Caco-2 (cell line): ENCODE measurements at regions of chr10 and their contacts with region 1.

Region 1: GRCh38 chr10:86688398-86688921 is 20.1 kb downstream of the LDB3 start:
- DNase-seq: peak; percentile 62 to 67
- H3K4me3 ChIP-seq: no peak overlapping the region
- H3K4me3 Mint-ChIP-seq: no peak overlapping the region
- H3K27ac Mint-ChIP-seq: no peak overlapping the region
- H3K4me1 ChIP-seq: no peaks in the 10 kb centered on the region
- H3K4me1 Mint-ChIP-seq: no peaks in the 10 kb centered on the region
- H3K27me3 ChIP-seq: no peaks in the 10 kb centered on the region
- H3K27me3 Mint-ChIP-seq: peaks cover 3% of the 10 kb centered on the region
- CTCF ChIP-seq: peak; percentile 83 to 92

Region 2: DNA sequence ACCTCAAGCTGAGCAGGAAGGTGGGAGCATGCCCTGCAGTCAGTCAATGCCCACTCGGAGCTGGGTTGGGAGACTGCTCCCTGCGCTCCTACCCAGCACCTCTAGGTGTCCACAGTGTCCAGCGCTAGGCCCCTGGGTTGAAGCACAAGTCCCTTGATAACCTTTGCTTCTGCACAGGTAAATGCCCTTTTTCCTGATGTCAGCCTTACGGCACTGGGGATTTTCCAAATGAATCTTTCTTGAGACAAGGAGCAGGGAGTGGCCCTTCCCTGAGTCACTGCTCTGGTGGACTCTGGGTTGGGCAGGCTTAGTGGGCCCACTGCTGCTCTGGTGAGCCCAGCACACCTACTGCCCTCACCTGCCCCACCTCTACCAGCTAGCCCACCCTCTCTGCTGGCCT is 96.0 kb before region 1 on chr10:
- CTCF ChIA-PET with region 1: interaction called, 8 read pairs
- POLR2A ChIA-PET with region 1: no interaction called
- intact Hi-C with region 1: loop called (anchors 1 kb)
- DNase-seq: peak; percentile 65 to 68
- H3K4me3 ChIP-seq: no peak overlapping the region
- H3K4me3 Mint-ChIP-seq: no peak overlapping the region
- H3K27ac Mint-ChIP-seq: no peak overlapping the region
- H3K4me1 ChIP-seq: peaks cover 9% of the 10 kb centered on the region; the same call in 1 of the 2 replicates
- H3K4me1 Mint-ChIP-seq: peaks cover 7% of the 10 kb centered on the region
- H3K27me3 ChIP-seq: no peaks in the 10 kb centered on the region
- H3K27me3 Mint-ChIP-seq: no peaks in the 10 kb centered on the region
- CTCF ChIP-seq: peak; percentile 58 to 81

Region 3: DNA sequence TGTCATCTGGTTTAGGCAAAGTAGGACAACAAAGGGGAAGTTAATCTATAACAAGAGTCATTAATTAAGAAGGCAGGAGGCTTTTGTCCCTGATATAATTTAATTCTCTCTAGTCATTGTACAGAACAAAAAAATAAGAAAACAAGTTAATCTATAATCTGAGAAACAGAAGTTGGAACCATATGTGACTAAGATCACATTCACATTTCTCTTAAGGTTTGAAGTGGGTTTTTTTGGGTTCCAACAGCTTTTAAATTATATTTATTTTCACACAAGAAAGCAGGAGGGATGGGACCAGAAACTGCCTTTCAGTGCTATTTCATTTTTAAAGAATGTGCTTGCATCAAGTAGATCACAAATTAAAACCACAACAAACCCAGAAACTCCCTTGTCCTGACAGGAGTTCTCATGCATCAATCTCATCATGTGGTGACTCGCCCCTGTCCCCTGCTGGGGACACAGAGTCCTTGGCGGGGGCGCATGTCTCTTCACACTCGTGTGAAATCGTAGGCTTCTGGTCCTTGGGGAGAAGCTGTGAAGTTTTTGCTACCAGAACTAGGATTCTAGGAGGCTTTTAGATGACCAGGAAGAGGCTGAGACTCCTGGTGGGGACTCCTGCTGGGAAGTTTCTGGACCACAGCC is 44.2 kb before region 1 on chr10:
- CTCF ChIA-PET with region 1: interaction called, 5 read pairs
- POLR2A ChIA-PET with region 1: no interaction called
- intact Hi-C with region 1: loop called (anchors 5 kb)
- DNase-seq: peak in 1 of 2 experiments; percentile 32
- H3K4me3 ChIP-seq: no peak overlapping the region
- H3K4me3 Mint-ChIP-seq: no peak overlapping the region
- H3K27ac Mint-ChIP-seq: no peak overlapping the region
- H3K4me1 ChIP-seq: no peaks in the 10 kb centered on the region
- H3K4me1 Mint-ChIP-seq: no peaks in the 10 kb centered on the region
- H3K27me3 ChIP-seq: no peaks in the 10 kb centered on the region
- H3K27me3 Mint-ChIP-seq: peaks cover 2% of the 10 kb centered on the region
- CTCF ChIP-seq: peak; percentile 44 to 78

Region 4: GRCh38 chr10:86899670-86900276 is 211.3 kb after region 1 on chr10:
- CTCF ChIA-PET with region 1: interaction called, 5 read pairs
- POLR2A ChIA-PET with region 1: no interaction called
- intact Hi-C with region 1: loop called (anchors 1 kb)
- DNase-seq: peak; percentile 55 to 76
- H3K4me3 ChIP-seq: no peak overlapping the region
- H3K4me3 Mint-ChIP-seq: no peak overlapping the region
- H3K27ac Mint-ChIP-seq: peak overlapping the region; percentile 27
- H3K4me1 ChIP-seq: no peaks in the 10 kb centered on the region
- H3K4me1 Mint-ChIP-seq: peaks cover 12% of the 10 kb centered on the region
- H3K27me3 ChIP-seq: no peaks in the 10 kb centered on the region
- H3K27me3 Mint-ChIP-seq: no peaks in the 10 kb centered on the region
- CTCF ChIP-seq: peak; percentile 72 to 83

Region 5: GRCh38 chr10:86936661-86937501 is 248.4 kb after region 1 on chr10:
- CTCF ChIA-PET with region 1: interaction called, 3 read pairs
- POLR2A ChIA-PET with region 1: no interaction called
- intact Hi-C with region 1: loop called (anchors 2 kb)
- DNase-seq: no peak
- H3K4me3 ChIP-seq: no peak overlapping the region
- H3K4me3 Mint-ChIP-seq: no peak overlapping the region
- H3K27ac Mint-ChIP-seq: no peak overlapping the region
- H3K4me1 ChIP-seq: peaks cover 9% of the 10 kb centered on the region; the same call in 1 of the 2 replicates
- H3K4me1 Mint-ChIP-seq: no peaks in the 10 kb centered on the region
- H3K27me3 ChIP-seq: no peaks in the 10 kb centered on the region
- H3K27me3 Mint-ChIP-seq: no peaks in the 10 kb centered on the region
- CTCF ChIP-seq: no peak

Region 6: GRCh38 chr10:86965986-86966654 is 277.7 kb after region 1 on chr10:
- CTCF ChIA-PET with region 1: no interaction called
- POLR2A ChIA-PET with region 1: interaction called, 3 read pairs
- intact Hi-C with region 1: loop called (anchors 1 kb)
- DNase-seq: no peak
- H3K4me3 ChIP-seq: no peak overlapping the region
- H3K4me3 Mint-ChIP-seq: no peak overlapping the region
- H3K27ac Mint-ChIP-seq: peak overlapping the region; percentile 55
- H3K4me1 ChIP-seq: peaks cover 23% of the 10 kb centered on the region
- H3K4me1 Mint-ChIP-seq: peaks cover 15% of the 10 kb centered on the region
- H3K27me3 ChIP-seq: no peaks in the 10 kb centered on the region
- H3K27me3 Mint-ChIP-seq: no peaks in the 10 kb centered on the region
- CTCF ChIP-seq: no peak